Heart left ventricle (tissue), 16 donors: ENCODE measurements at regions of chr12 and their contacts with region 1.

Region 1: GRCh38 chr12:124321040-124321481 is 26.2 kb downstream of the RFLNA start:
- DNase-seq: peak; percentile 58 to 84 (median 65)
- ATAC-seq: peak; percentile 68 to 78 (median 74)
- H3K4me3 ChIP-seq: no peak overlapping the region
- H3K27ac ChIP-seq: no peak overlapping the region
- H3K4me1 ChIP-seq: peaks cover 0 to 6% (median 0%) of the 10 kb centered on the region in 12 donors
- H3K27me3 ChIP-seq: no peaks in the 10 kb centered on the region
- CTCF ChIP-seq: peak; percentile 83 to 97 (median 94)
- POLR2A ChIP-seq: no peak

Region 2: GRCh38 chr12:124036674-124037109 is 284.4 kb before region 1 on chr12:
- intact Hi-C with region 1: loop called (anchors 2 to 5 kb)
- DNase-seq: peak in 1 of 5 donors; percentile 49
- ATAC-seq: peak in 3 of 4 donors; percentile 35 to 55 (median 51)
- H3K4me3 ChIP-seq: no peak overlapping the region
- H3K27ac ChIP-seq: no peak overlapping the region
- H3K4me1 ChIP-seq: peaks cover 0 to 9% (median 0%) of the 10 kb centered on the region in 12 donors
- H3K27me3 ChIP-seq: no peaks in the 10 kb centered on the region
- CTCF ChIP-seq: peak; percentile 84 to 99 (median 94)
- POLR2A ChIP-seq: no peak

Region 3: DNA sequence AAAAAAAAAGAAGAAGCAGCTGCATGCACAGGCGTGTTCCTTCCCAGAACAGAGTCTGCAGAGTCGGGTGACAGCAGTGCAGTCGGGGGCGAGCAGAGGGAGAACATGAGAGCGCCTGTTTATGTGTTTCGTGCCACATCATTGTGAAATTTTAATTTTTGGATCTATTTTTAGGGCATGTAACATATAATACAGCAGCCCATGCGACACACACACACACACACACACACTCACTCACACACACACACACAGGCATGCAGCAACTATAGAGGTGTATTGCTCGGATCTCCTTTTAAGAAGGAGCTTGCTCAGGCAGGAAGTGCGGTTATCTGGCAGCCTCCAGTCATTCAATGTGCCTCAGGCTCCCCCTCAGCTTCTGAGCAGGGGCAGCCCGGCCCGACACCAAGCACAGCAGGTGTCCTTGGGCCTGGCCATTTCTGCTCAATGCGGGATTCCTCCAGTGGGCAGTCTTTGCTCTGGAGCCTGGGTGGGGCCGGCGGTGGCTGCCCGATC is 276.2 kb before region 1 on chr12:
- intact Hi-C with region 1: loop called in 5 of 10 experiments (anchors 5 kb)
- DNase-seq: no peak
- ATAC-seq: no peak
- H3K4me3 ChIP-seq: no peak overlapping the region
- H3K27ac ChIP-seq: no peak overlapping the region
- H3K4me1 ChIP-seq: peaks cover 0 to 11% (median 4%) of the 10 kb centered on the region in 12 donors
- H3K27me3 ChIP-seq: no peaks in the 10 kb centered on the region
- CTCF ChIP-seq: no peak
- POLR2A ChIP-seq: no peak

Region 4: DNA sequence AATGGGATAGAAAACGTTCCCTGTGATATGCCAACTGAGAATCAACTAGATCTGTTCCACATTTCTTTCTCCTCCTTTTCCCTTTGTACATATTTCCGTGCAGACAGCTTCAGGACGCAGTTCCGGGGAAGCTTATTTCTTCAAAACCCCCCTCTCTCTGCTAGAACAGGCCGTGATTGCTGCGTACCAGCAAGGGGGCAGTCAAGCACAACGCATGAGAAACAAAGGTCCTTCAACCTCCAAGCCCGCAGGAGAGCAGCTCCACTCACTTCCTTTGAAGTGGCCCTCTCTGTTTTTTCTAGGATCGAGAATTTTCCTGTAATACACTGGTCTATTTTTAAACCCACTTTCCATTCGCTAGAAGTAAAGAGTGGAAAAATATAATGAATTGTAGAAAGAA is 267.2 kb before region 1 on chr12:
- intact Hi-C with region 1: loop called (anchors 2 to 5 kb)
- DNase-seq: peak in 4 of 5 donors; percentile 50 to 62 (median 58)
- ATAC-seq: peak; percentile 79 to 94 (median 88)
- H3K4me3 ChIP-seq: no peak overlapping the region
- H3K27ac ChIP-seq: no peak overlapping the region
- H3K4me1 ChIP-seq: peaks cover 0 to 17% (median 5%) of the 10 kb centered on the region in 12 donors
- H3K27me3 ChIP-seq: no peaks in the 10 kb centered on the region
- CTCF ChIP-seq: peak; percentile 39 to 82 (median 72)
- POLR2A ChIP-seq: no peak

Region 5: DNA sequence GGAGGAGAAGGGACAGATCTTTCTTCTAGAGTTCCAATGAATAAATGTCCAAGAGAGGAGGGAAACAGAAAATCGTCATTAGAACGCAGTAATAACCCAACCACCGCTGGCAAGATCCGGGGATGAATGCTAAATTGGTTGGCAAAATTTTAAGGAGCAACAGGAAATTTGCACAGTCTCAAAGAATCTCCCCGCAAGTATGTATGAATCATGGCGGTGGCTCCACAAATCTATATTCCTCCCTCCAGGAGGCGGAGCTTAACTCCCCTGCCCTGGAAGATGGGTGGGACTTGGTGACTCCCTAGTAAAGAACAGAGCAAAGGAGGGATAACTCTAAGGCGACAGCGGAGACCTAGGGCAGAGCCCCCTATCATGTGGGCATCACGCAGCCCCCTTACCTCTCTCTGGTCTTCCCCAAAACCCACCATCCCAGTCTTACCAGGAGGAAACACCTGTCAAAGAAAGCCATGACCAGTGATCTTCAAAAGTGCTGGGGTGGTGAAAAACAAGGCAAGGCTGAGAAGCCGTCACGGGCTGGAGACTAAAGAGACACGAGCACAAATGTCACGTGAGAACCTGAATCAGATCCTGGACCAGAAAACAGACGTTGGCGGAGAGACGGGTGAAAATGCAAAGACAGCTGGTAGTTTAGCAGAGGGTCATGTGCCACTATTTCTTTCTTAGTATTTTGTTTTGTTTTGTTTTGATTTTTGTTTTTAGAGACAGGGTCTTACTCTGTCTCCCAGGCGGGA is 120.6 kb after region 1 on chr12:
- intact Hi-C with region 1: no loop called
- DNase-seq: no peak
- ATAC-seq: peak in 1 of 4 donors; percentile 32
- H3K4me3 ChIP-seq: no peak overlapping the region
- H3K27ac ChIP-seq: peak overlapping the region in 10 of 12 donors; percentile 11 to 79 (median 47)
- H3K4me1 ChIP-seq: peaks cover 4 to 52% (median 36%) of the 10 kb centered on the region in 12 donors
- H3K27me3 ChIP-seq: no peaks in the 10 kb centered on the region
- CTCF ChIP-seq: no peak
- POLR2A ChIP-seq: no peak